ENCODE measurements at regions of chr4 and their contacts with region 1.

Region 1: DNA sequence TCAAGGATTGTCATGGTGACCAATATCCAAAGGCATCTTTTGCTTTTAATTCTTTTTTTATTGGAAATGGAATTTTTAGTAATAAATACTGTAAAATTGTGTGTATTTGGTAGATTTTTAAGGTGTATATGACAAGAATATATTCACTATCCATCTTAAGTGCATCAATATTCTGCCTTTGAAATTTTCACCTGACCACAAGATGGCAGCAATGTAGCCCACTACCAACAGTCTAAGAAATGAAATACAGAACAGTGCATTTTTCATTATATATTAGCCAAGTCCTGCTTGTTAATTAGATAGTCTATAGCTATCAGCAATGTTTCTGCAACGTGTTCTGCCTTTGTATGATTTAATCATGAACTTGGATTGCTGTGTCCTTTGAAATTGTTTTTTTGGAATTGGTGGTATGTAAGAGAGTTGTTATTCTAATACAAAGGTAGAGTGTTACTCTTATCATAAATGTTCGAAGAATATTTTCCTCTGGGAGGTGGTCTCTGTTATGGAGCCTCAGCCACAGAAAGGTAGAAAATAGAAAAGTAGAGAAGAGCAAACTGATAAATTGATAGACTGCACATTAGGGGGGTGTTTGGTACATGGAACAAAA is 38.2 kb downstream of the HPGDS start:
- DNase-seq: peak; percentile 51
- H3K4me3 ChIP-seq: no peak overlapping the region
- H3K27ac ChIP-seq: no peak overlapping the region
- H3K4me1 ChIP-seq: peaks cover 17% of the 10 kb centered on the region
- H3K27me3 ChIP-seq: no peaks in the 10 kb centered on the region
- CTCF ChIP-seq: peak; percentile 61

Region 2: GRCh38 chr4:93855926-93856325 is 448.5 kb before region 1 on chr4:
- CTCF ChIA-PET with region 1: no interaction called
- POLR2A ChIA-PET with region 1: no interaction called
- intact Hi-C with region 1: no loop called
- DNase-seq: no peak
- H3K4me3 ChIP-seq: no peak overlapping the region
- H3K27ac ChIP-seq: no peak overlapping the region
- H3K4me1 ChIP-seq: no peaks in the 10 kb centered on the region
- H3K27me3 ChIP-seq: no peaks in the 10 kb centered on the region
- CTCF ChIP-seq: no peak

Region 3: DNA sequence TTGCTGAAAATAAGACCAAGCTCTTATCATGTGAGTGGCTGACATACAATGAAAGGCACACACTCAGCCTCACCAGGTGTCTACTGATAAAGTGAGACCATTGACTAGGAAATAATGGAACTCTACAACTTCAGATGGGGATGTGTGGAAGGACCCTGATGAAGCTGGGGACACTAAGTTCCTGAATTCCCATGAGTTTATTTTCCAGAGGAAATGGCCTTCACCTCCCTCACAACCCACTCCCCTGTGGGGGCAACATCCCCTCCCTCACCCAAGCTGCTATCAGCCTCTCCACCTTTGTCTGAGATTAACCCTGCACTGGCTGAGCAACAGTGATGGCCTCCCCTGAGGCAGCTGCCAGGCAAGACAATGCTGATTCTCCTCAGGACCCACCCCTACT is 152.0 kb before region 1 on chr4:
- CTCF ChIA-PET with region 1: no interaction called
- POLR2A ChIA-PET with region 1: no interaction called
- intact Hi-C with region 1: no loop called
- DNase-seq: no peak
- H3K4me3 ChIP-seq: no peak overlapping the region
- H3K27ac ChIP-seq: no peak overlapping the region
- H3K4me1 ChIP-seq: no peaks in the 10 kb centered on the region
- H3K27me3 ChIP-seq: no peaks in the 10 kb centered on the region
- CTCF ChIP-seq: no peak

Region 4: DNA sequence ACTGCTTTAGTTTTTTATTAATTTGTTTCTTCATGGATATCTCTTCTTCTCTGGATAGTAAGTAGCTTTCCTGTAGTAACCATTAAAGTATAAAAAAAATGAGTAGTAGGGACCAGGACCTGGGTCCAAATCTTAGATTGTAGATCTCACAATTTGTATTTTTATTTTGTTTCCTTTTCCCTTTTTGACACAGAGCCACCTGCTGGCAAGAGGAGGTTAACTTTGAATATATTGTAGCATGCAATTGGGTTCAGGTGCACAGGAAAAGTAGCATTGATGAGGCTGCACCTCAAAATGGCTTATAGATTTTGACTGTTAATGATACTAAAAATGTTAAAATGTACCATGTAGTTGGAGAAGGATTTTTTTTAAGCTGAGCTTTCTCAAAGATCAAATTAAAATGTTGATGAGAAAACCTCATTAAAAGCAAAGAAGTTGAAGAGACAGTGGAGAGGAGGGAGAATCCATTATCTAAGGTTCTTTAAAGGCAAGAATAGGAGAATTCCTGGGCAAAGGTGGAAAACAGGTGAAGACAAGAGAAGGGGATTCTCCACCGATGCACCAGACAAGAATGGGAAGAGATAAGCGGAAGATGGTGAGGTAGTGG is 86.4 kb after region 1 on chr4:
- CTCF ChIA-PET with region 1: no interaction called
- POLR2A ChIA-PET with region 1: no interaction called
- intact Hi-C with region 1: loop called (anchors 5 kb)
- DNase-seq: peak; percentile 11
- H3K4me3 ChIP-seq: no peak overlapping the region
- H3K27ac ChIP-seq: no peak overlapping the region
- H3K4me1 ChIP-seq: no peaks in the 10 kb centered on the region
- H3K27me3 ChIP-seq: no peaks in the 10 kb centered on the region
- CTCF ChIP-seq: peak; percentile 53

Region 5: DNA sequence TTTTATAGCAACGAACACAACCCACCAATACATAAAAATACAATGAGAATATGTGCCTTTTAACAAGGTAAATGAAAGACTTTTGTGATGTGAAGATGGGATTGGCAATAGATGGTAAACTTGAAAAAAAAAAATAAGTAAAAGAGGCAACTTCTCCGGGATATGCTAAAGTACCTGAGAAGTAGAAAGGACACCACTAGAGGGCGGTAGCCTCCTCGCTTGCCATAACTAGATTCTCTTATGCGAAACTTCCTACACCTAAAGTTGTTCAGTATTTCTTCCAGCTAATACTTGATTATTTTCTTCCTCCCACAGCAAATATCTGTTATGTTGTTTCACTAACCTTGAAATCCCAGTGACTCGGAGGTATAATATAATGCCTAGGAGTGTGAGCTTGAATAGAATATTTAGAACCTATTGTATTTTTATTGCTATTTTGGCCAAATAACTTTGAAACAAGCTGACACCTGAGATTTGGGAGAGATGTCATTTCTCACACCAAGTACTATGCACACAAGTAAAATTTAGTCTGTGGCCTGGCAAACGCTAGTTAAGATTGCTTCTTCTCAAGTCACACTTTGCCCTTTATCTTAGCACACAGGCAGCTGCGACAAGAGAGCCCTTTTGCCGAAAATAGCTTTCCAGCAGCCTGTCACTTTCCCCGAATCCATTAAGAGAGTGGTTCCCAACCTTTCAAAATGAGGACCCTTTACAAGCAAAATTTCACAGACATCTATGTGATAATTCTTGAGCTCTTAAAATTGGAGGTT is 102.4 kb after region 1 on chr4:
- CTCF ChIA-PET with region 1: interaction called, 3 read pairs
- POLR2A ChIA-PET with region 1: no interaction called
- intact Hi-C with region 1: loop called (anchors 5 kb)
- DNase-seq: peak; percentile 81
- H3K4me3 ChIP-seq: no peak overlapping the region
- H3K27ac ChIP-seq: peak overlapping the region; percentile 100
- H3K4me1 ChIP-seq: peaks cover 45% of the 10 kb centered on the region
- H3K27me3 ChIP-seq: no peaks in the 10 kb centered on the region
- CTCF ChIP-seq: peak; percentile 72

Region 6: GRCh38 chr4:94595879-94596483 is 291.5 kb after region 1 on chr4:
- CTCF ChIA-PET with region 1: no interaction called
- POLR2A ChIA-PET with region 1: no interaction called
- intact Hi-C with region 1: loop called (anchors 5 kb)
- DNase-seq: peak; percentile 61
- H3K4me3 ChIP-seq: no peak overlapping the region
- H3K27ac ChIP-seq: peak overlapping the region; percentile 62
- H3K4me1 ChIP-seq: peaks cover 21% of the 10 kb centered on the region
- H3K27me3 ChIP-seq: no peaks in the 10 kb centered on the region
- CTCF ChIP-seq: peak; percentile 51

Region 7: DNA sequence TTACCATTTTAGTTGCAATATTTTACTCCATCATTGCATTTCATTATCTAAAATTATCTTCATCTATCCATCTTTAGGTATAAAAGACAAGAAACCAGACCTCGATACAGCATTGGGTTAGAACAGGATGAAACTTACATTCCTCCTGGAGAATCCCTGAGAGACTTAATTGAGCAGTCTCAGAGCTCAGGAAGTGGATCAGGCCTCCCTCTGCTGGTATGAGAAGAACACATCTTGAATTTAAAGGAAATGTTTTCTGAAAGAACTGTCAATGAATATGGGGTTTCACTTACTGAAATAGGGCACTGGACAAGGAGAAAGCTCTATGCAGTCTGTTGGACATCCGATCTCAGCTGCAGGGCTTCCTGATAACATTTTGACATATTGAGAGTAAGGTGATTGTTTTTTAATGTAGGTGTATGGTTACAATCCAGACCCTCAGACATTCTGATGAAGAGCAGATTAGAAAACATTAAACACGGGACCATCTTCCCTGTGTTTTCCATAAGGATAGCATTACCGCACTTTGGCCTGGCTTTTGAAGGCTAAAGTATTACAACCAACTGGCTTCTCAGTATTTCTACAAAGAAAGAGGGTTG is 820.5 kb after region 1 on chr4:
- CTCF ChIA-PET with region 1: no interaction called
- POLR2A ChIA-PET with region 1: no interaction called
- intact Hi-C with region 1: loop called (anchors 10 kb)
- DNase-seq: peak; percentile 65
- H3K4me3 ChIP-seq: no peak overlapping the region
- H3K27ac ChIP-seq: no peak overlapping the region
- H3K4me1 ChIP-seq: peaks cover 8% of the 10 kb centered on the region
- H3K27me3 ChIP-seq: no peaks in the 10 kb centered on the region
- CTCF ChIP-seq: peak; percentile 57

Measured in A673 (cell line).